A549 (cell line): ENCODE measurements at regions of chr9 and their contacts with region 1.

Region 1: GRCh38 chr9:33415501-33416038 is 13.2 kb upstream of the AQP7 start:
- DNase-seq: peak; percentile 89 to 98
- ATAC-seq: peak; percentile 91 to 92
- H3K4me3 ChIP-seq: no peak overlapping the region
- H3K27ac ChIP-seq: peak overlapping the region; percentile 77 to 87
- H3K4me1 ChIP-seq: peaks cover 46% of the 10 kb centered on the region
- CTCF ChIP-seq: peak; percentile 91
- EP300 ChIP-seq: peak; percentile 83 to 91; a peak in 4 of 5 replicates
- POLR2A ChIP-seq: no peak
- RAD21 ChIP-seq: peak; percentile 66 to 83

Region 2: DNA sequence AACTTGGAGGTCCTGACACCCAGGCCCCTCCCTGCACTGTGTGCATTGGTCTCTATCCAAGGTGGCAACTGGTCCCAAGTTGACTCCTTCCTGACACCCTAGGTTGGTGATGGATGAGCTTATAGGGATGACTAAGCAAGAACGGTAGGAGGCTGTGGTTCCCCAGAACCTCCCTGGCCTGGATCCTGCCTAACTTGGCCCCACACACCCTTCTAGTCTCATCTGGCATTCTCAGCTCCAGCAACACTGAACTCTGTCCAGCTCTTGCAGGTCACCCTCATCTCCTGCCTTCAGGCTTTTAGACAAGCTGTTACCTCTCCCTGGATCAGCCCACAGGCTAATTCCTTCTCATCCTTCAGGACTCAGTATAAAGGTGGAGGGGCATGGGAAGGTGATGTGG is 15.4 kb after region 1 on chr9:
- CTCF ChIA-PET with region 1: interaction called, 38 read pairs
- POLR2A ChIA-PET with region 1: no interaction called
- DNase-seq: peak in 1 of 2 experiments; percentile 72
- ATAC-seq: peak; percentile 46 to 72; a peak in 3 of 6 replicates
- H3K4me3 ChIP-seq: no peak overlapping the region
- H3K27ac ChIP-seq: peak overlapping the region; percentile 52 to 73
- H3K4me1 ChIP-seq: peaks cover 28% of the 10 kb centered on the region
- CTCF ChIP-seq: no peak
- EP300 ChIP-seq: no peak
- POLR2A ChIP-seq: no peak
- RAD21 ChIP-seq: no peak

Region 3: GRCh38 chr9:33446946-33447798 is 31.6 kb after region 1 on chr9 and contains the start of gene AQP3:
- CTCF ChIA-PET with region 1: interaction called, 134 read pairs
- POLR2A ChIA-PET with region 1: no interaction called
- DNase-seq: peak; percentile 63 to 80
- ATAC-seq: peak; percentile 88 to 92
- H3K4me3 ChIP-seq: peak within 1 kb of the TSS; percentile 42
- H3K27ac ChIP-seq: peak within 1 kb of the TSS; percentile 43 to 80
- H3K4me1 ChIP-seq: peaks cover 36% of the 10 kb centered on the region
- CTCF ChIP-seq: peak; percentile 51
- EP300 ChIP-seq: no peak
- POLR2A ChIP-seq: peak; percentile 14; the same call in 1 of the 2 replicates
- RAD21 ChIP-seq: peak; percentile 4 to 55; a peak in 4 of 5 replicates
- polyA plus RNA-seq, gene AQP3: 18.8 and 21.7 TPM in 2 replicates

Region 4: DNA sequence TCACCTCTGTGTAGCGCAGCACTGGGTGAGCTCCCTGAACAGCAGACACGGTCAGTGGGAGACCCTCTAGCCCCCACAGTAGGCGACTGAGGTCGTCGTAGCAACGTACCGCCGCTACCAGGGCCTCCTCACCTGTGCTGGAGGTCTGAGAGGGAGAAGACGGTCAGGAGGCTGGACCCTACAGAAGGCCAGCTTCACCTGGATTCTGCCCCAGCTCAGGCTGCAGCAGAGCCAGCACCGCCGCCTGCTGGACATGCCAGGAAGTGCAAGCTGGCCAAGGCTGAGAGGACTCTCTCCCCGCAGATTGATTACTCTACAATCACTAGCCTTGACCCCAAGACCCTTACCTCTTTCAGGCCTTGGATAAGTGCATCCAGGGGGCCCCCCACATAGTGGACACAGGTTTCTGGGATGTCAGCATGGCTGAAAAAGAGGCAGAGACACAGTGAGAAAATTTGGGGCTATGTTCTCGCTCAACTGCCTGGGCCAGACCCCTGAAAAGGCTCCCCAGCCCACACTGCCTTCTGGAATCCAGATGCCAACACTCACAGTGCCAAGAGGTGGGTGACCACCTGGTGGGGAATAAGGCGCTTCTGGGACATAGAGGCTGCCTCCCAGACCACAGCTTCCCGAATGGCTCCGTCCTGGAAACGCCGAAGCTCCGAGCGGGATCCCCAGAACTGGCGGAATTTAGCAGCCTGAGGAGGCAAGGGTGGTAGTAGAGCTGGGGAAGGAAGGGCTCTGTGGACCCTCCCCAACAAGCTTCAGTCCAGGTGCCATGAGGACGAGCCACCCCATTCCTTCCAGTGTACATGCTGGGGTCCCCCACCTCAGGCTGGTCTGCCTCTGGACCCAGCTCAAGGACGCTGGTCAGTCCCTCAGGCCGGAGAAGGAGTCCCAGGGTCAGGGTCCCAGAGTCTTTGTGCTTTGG is 51.3 kb after region 1 on chr9:
- CTCF ChIA-PET with region 1: interaction called, 177 read pairs
- POLR2A ChIA-PET with region 1: interaction called, 3 read pairs
- DNase-seq: peak; percentile 55 to 75
- ATAC-seq: peak; percentile 74 to 90
- H3K4me3 ChIP-seq: no peak overlapping the region
- H3K27ac ChIP-seq: peak overlapping the region in 1 of 2 experiments; percentile 57; a peak in 2 of 6 replicates
- H3K4me1 ChIP-seq: peaks cover 4% of the 10 kb centered on the region
- CTCF ChIP-seq: peak; percentile 88
- EP300 ChIP-seq: no peak
- POLR2A ChIP-seq: no peak
- RAD21 ChIP-seq: peak; percentile 90 to 92